ENCODE measurements at regions of chr10 and their contacts with region 1.

Region 1: DNA sequence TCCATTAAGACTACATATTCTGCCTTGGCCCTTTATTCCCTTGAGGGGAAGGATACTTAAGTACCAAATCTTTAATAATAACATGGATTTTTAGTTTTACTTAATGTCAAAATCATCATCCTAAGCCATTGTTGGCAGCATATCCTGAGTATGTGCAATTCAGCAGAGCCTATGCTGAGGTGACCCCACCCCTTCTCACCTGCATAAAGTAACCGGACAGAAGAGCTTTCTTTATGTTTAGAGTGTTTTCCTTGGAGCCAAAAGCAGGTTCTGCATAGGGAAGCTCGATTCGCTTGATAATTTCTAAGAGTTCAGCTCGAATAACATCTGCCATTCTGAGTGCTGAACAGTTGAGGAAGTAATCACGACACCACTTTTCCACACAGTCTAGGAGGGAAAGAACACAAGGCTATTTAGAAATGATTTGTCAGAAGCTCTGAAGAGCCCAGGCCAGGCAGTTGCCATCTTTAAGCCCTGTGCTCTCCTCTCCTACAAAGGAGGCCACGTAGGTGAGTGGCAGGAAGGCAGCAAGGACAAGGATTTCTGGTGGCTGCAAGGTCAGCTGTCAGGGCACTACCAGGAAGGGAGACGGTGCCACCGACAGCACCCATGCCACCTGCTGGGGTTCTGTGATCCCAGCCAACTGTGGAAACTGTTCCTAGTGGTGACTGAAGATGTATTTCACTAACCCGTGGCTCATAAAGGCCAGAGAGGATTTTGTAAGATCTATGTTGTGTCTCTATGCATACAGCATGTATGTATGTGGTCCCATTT is 15.6 kb downstream of the BCCIP start:
- DNase-seq: no peak
- H3K4me3 ChIP-seq: no peak overlapping the region
- H3K27ac ChIP-seq: no peak overlapping the region
- H3K4me1 ChIP-seq: peaks cover under 1% of the 10 kb centered on the region
- H3K27me3 ChIP-seq: no peaks in the 10 kb centered on the region
- CTCF ChIP-seq: no peak

Region 2: DNA sequence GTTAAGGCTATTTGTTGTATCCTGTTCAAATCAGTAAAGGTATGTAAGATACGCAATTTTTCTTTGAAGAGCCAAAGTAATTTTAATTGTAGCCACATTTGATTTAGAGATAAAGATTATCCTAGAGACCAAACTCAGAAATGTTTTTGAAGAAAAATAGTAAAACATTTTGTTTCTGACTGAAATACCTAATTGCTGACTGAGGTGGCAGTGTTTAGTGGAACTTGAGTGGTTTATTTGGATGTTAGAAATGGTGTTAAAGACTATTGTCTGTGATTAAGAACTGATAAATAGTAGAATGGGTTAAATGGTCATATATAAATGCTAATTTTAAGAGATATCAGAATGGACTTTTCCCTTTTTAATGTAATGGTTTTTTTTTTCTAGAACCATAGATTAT is 104.2 kb before region 1 on chr10:
- intact Hi-C with region 1: loop called (anchors 10 kb)
- DNase-seq: no peak
- H3K4me3 ChIP-seq: no peak overlapping the region
- H3K27ac ChIP-seq: no peak overlapping the region
- H3K4me1 ChIP-seq: peaks cover 17% of the 10 kb centered on the region
- H3K27me3 ChIP-seq: no peaks in the 10 kb centered on the region
- CTCF ChIP-seq: no peak

Region 3: GRCh38 chr10:126124668-126125349 is 285.8 kb after region 1 on chr10:
- intact Hi-C with region 1: no loop called
- DNase-seq: no peak
- H3K4me3 ChIP-seq: no peak overlapping the region
- H3K27ac ChIP-seq: no peak overlapping the region
- H3K4me1 ChIP-seq: no peaks in the 10 kb centered on the region
- H3K27me3 ChIP-seq: no peaks in the 10 kb centered on the region
- CTCF ChIP-seq: no peak